ENCODE measurements at regions of chr5 and their contacts with region 1.

Region 1: GRCh38 chr5:168987543-168988300 is 313.2 kb downstream of the SLIT3 start:
- DNase-seq: peak; percentile 76
- H3K4me3 ChIP-seq: no peak overlapping the region
- H3K27ac ChIP-seq: no peak overlapping the region
- H3K4me1 ChIP-seq: no peaks in the 10 kb centered on the region
- H3K27me3 ChIP-seq: no peaks in the 10 kb centered on the region
- CTCF ChIP-seq: peak; percentile 83 to 95 (median 88)
- POLR2A ChIP-seq: no peak

Region 2: DNA sequence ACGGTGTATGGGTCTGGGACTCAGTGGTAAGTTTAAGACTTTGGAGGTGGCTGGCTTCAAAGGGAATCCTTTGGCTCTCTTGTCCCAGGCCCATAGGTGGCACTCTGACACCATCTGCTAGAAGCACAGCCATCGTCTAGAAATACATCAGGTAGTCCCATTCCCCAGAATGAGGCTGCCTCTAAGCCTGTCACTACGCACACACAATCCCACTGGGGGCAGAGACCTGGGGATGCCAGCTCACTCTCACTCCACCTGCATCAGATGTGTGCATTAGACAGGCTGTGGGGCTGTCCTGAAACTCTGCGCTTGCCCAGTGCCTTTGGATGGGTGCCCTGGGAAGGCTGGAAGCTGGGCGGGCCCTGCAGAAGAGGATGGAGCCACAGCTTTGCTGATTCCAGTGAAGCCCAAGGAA is 281.1 kb before region 1 on chr5:
- intact Hi-C with region 1: loop called (anchors 10 kb)
- DNase-seq: no peak
- H3K4me3 ChIP-seq: no peak overlapping the region
- H3K27ac ChIP-seq: no peak overlapping the region
- H3K4me1 ChIP-seq: no peaks in the 10 kb centered on the region
- H3K27me3 ChIP-seq: no peaks in the 10 kb centered on the region
- CTCF ChIP-seq: peak in 3 of 4 experiments; percentile 19 to 47 (median 45)
- POLR2A ChIP-seq: no peak

Region 3: GRCh38 chr5:169548315-169548714 is 560.6 kb after region 1 on chr5:
- intact Hi-C with region 1: loop called (anchors 5 kb)
- DNase-seq: peak; percentile 5
- H3K4me3 ChIP-seq: no peak overlapping the region
- H3K27ac ChIP-seq: no peak overlapping the region
- H3K4me1 ChIP-seq: no peaks in the 10 kb centered on the region
- H3K27me3 ChIP-seq: no peaks in the 10 kb centered on the region
- CTCF ChIP-seq: peak in 3 of 4 experiments; percentile 26 to 60 (median 36)
- POLR2A ChIP-seq: no peak